Activated T-helper 2 cell treated with anti-CD3 and anti-CD28 coated beads, Interferon-gamma antibody, Interleukin-2, Interleukin-4, amounts not matched to agents 10 μg/mL and 5 μg/mL and 100 μg/mL, durations not matched to agents 14 hours and 24 hours and 36 hours (primary cell): ENCODE measurements at regions of chr12 and their contacts with region 1.

Region 1: DNA sequence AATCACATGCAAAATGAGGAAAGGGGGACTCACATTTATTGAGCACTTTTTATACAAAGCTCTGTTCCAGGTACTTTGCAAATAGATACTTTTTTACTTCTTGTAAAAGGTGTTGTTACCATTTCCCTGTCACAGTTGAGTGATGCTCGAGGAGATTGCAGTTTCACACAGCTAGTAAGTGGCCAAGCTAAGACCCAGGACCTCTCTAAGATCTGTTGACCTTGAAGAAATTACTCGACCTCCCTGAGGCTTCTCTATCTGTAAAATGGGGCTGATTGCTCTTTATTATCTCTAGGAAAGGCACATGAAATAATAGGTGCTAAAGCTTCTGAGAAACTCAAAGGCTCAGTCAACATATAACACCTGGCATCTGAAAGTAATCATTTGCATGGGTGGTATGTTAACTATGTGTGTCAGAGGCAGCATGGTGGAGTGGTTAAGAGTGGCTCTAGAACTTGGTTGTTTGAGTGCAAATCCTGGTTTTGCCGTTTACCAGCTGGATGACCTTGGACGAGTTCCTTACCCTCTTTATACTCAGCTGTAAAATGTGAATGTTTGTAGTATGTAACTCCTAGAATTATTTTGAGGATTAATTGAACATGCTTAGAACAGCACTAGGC is 41.5 kb downstream of the IFT81 start:
- DNase-seq: no peak
- H3K4me3 Mint-ChIP-seq: no peak overlapping the region
- H3K27ac Mint-ChIP-seq: no peak overlapping the region
- H3K4me1 Mint-ChIP-seq: no peaks in the 10 kb centered on the region
- H3K27me3 Mint-ChIP-seq: no peaks in the 10 kb centered on the region

Region 2: GRCh38 chr12:110176745-110177144 is 11.1 kb after region 1 on chr12:
- intact Hi-C with region 1: no loop called
- DNase-seq: no peak
- H3K4me3 Mint-ChIP-seq: no peak overlapping the region
- H3K27ac Mint-ChIP-seq: no peak overlapping the region
- H3K4me1 Mint-ChIP-seq: no peaks in the 10 kb centered on the region
- H3K27me3 Mint-ChIP-seq: peaks cover 1% of the 10 kb centered on the region

Region 3: DNA sequence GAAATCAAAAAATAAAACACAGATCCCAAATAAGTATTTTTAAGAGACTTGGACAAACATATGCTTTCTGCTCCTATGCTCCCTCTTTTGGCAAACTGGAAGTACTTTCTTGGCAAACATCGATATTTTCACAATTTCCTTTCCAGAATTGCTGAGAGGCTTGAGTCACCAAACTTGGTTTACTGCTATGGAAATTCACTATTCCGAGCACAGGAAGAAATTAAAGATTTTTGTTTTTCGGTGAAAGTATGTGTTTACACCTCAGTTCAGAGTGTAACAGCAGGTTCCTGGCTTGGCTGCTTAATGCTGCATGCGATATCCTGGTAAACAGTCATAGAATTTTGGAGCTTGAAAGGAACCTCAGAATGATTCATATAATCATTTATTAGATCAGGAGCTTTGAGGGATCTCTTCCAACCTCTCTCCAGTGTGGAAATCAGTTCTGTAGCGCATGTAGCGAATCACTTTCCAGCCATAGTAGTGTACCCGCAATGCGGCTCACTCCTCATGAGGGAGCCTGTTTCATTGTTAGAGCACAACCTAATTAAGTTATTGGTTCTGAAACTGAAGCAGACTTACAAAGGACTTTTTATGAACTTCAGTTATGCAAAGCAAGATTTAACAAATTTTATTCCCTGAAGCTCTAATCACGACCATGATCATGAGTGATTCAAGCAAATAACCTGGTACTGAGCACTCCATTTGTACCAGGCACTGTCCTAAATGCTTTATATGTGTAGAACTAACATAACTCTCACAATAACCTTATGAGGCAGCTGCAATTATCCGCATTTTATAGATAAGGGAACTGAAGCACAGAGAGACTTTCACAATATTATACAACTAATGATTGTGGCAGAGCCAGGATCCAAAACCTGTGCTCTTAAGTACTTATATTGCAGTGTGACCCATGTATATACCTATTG is 59.0 kb after region 1 on chr12:
- intact Hi-C with region 1: loop called (anchors 10 kb)
- DNase-seq: no peak
- H3K4me3 Mint-ChIP-seq: no peak overlapping the region
- H3K27ac Mint-ChIP-seq: no peak overlapping the region
- H3K4me1 Mint-ChIP-seq: no peaks in the 10 kb centered on the region
- H3K27me3 Mint-ChIP-seq: peaks cover 16% of the 10 kb centered on the region

Region 4: DNA sequence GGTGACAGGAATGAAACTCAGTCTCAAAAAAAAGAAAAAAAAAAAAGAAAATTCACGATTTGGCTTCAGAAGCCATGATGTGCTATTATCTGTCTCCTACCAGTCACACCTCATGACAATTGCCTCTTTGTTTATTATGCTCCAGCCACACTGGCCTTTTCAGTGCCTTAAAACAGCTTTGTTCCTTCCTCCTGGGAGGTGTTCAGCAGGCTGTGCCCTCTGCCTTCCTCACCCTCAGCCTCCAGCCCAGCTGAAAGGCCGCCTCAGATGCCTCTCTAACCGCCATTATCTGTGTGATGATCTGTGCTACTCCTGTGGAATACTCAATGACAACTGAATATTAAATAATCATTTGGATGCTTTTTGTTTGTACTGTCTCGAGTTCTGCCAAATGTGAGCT is 293.1 kb after region 1 on chr12:
- intact Hi-C with region 1: no loop called
- DNase-seq: no peak
- H3K4me3 Mint-ChIP-seq: no peak overlapping the region
- H3K27ac Mint-ChIP-seq: no peak overlapping the region
- H3K4me1 Mint-ChIP-seq: peaks cover 4% of the 10 kb centered on the region
- H3K27me3 Mint-ChIP-seq: no peaks in the 10 kb centered on the region